CD4-positive, alpha-beta T cell (primary cell): ENCODE measurements at regions of chr18 and their contacts with region 1.

Region 1: DNA sequence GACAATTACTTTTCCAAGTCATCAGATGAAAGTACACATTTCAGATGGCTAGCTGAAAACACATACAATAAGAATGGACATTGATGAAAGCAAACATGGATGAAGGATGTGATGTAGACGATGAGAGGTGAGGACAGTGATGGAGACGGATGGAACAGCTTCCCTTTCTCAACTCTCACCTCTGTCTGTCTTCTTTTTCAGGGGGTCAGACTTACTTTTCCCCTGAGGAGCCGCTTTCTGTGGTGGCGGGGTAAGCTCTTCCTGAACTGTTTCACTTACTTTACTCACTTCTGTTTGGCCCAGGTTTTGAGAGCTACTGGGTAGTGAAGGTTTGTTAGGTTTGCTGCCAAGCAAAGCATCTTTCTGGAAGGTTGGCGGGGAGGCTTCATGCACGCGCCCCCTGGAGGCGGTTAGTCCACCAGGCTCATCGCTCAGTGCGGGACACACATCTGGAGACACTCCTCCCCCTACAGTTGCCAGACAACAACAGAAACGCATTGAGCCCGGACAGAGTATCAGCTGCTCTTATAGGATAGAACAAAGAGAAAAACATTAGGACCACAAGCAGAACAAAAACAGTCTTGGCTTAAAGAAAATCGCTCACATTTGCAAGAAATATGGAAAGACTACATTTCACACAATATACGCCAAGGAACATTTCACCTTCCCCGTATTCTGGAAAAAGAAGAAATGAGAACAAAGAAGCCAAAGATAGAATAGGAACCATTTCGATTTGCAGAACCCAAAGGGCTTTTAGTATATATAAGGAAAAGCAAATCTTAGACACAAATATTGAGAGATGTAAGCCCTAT is 90.5 kb downstream of the MYOM1 start:
- DNase-seq: peak; percentile 67 to 90 (median 78)
- ATAC-seq: peak; percentile 99
- H3K4me3 ChIP-seq: no peak overlapping the region
- H3K4me3 Mint-ChIP-seq: no peak overlapping the region
- H3K27ac ChIP-seq: no peak overlapping the region
- H3K27ac Mint-ChIP-seq: no peak overlapping the region
- H3K4me1 ChIP-seq: peaks cover 5% of the 10 kb centered on the region
- H3K4me1 Mint-ChIP-seq: peaks cover 6% of the 10 kb centered on the region
- H3K27me3 ChIP-seq: no peaks in the 10 kb centered on the region
- H3K27me3 Mint-ChIP-seq: no peaks in the 10 kb centered on the region
- CTCF ChIP-seq: peak; percentile 94

Region 2: GRCh38 chr18:2240311-2240705 is 889.0 kb before region 1 on chr18:
- CTCF ChIA-PET with region 1: no interaction called
- POLR2A ChIA-PET with region 1: no interaction called
- intact Hi-C with region 1: no loop called
- DNase-seq: no peak
- ATAC-seq: no peak
- H3K4me3 ChIP-seq: no peak overlapping the region
- H3K4me3 Mint-ChIP-seq: no peak overlapping the region
- H3K27ac ChIP-seq: no peak overlapping the region
- H3K27ac Mint-ChIP-seq: no peak overlapping the region
- H3K4me1 ChIP-seq: no peaks in the 10 kb centered on the region
- H3K4me1 Mint-ChIP-seq: no peaks in the 10 kb centered on the region
- H3K27me3 ChIP-seq: peaks cover 0 to 6% of the 10 kb centered on the region in 2 experiments
- H3K27me3 Mint-ChIP-seq: peaks cover 30% of the 10 kb centered on the region
- CTCF ChIP-seq: no peak

Region 3: GRCh38 chr18:2932247-2933181 is 196.7 kb before region 1 on chr18:
- CTCF ChIA-PET with region 1: interaction called, 11 read pairs
- POLR2A ChIA-PET with region 1: interaction called, 3 read pairs
- intact Hi-C with region 1: loop called (anchors 1 kb)
- DNase-seq: peak in 8 of 14 experiments; percentile 13 to 84 (median 51)
- ATAC-seq: peak; percentile 80
- H3K4me3 ChIP-seq: no peak overlapping the region
- H3K4me3 Mint-ChIP-seq: no peak overlapping the region
- H3K27ac ChIP-seq: peak overlapping the region; percentile 18 to 51
- H3K27ac Mint-ChIP-seq: peak overlapping the region; percentile 67
- H3K4me1 ChIP-seq: peaks cover 9% of the 10 kb centered on the region
- H3K4me1 Mint-ChIP-seq: peaks cover 36% of the 10 kb centered on the region
- H3K27me3 ChIP-seq: no peaks in the 10 kb centered on the region
- H3K27me3 Mint-ChIP-seq: no peaks in the 10 kb centered on the region
- CTCF ChIP-seq: peak; percentile 92

Region 4: GRCh38 chr18:3048121-3048520 is 81.1 kb before region 1 on chr18:
- CTCF ChIA-PET with region 1: no interaction called
- POLR2A ChIA-PET with region 1: no interaction called
- intact Hi-C with region 1: no loop called
- DNase-seq: peak in 1 of 14 experiments; percentile 19
- ATAC-seq: no peak
- H3K4me3 ChIP-seq: no peak overlapping the region
- H3K4me3 Mint-ChIP-seq: no peak overlapping the region
- H3K27ac ChIP-seq: no peak overlapping the region
- H3K27ac Mint-ChIP-seq: no peak overlapping the region
- H3K4me1 ChIP-seq: peaks cover 17% of the 10 kb centered on the region
- H3K4me1 Mint-ChIP-seq: peaks cover 48% of the 10 kb centered on the region
- H3K27me3 ChIP-seq: no peaks in the 10 kb centered on the region
- H3K27me3 Mint-ChIP-seq: no peaks in the 10 kb centered on the region
- CTCF ChIP-seq: no peak

Region 5: GRCh38 chr18:3097082-3097481 is 32.2 kb before region 1 on chr18:
- CTCF ChIA-PET with region 1: interaction called, 10 read pairs
- POLR2A ChIA-PET with region 1: no interaction called
- intact Hi-C with region 1: no loop called
- DNase-seq: peak in 5 of 14 experiments; percentile 3 to 77 (median 70)
- ATAC-seq: peak; percentile 95
- H3K4me3 ChIP-seq: no peak overlapping the region
- H3K4me3 Mint-ChIP-seq: peak overlapping the region; percentile 5
- H3K27ac ChIP-seq: no peak overlapping the region
- H3K27ac Mint-ChIP-seq: peak overlapping the region; percentile 70
- H3K4me1 ChIP-seq: peaks cover 16% of the 10 kb centered on the region
- H3K4me1 Mint-ChIP-seq: peaks cover 40% of the 10 kb centered on the region
- H3K27me3 ChIP-seq: no peaks in the 10 kb centered on the region
- H3K27me3 Mint-ChIP-seq: no peaks in the 10 kb centered on the region
- CTCF ChIP-seq: no peak

Region 6: GRCh38 chr18:3604498-3605408 is 475.5 kb after region 1 on chr18:
- CTCF ChIA-PET with region 1: no interaction called
- POLR2A ChIA-PET with region 1: no interaction called
- intact Hi-C with region 1: no loop called
- DNase-seq: peak in 5 of 14 experiments; percentile 9 to 85 (median 72)
- ATAC-seq: peak; percentile 69
- H3K4me3 ChIP-seq: peak overlapping the region; percentile 47
- H3K4me3 Mint-ChIP-seq: no peak overlapping the region
- H3K27ac ChIP-seq: peak overlapping the region; percentile 38 to 58
- H3K27ac Mint-ChIP-seq: no peak overlapping the region
- H3K4me1 ChIP-seq: peaks cover 47% of the 10 kb centered on the region
- H3K4me1 Mint-ChIP-seq: peaks cover 8% of the 10 kb centered on the region
- H3K27me3 ChIP-seq: no peaks in the 10 kb centered on the region
- H3K27me3 Mint-ChIP-seq: no peaks in the 10 kb centered on the region
- CTCF ChIP-seq: no peak